GM13977 (cell line): ENCODE measurements at regions of chr2 and their contacts with region 1.

Region 1: DNA sequence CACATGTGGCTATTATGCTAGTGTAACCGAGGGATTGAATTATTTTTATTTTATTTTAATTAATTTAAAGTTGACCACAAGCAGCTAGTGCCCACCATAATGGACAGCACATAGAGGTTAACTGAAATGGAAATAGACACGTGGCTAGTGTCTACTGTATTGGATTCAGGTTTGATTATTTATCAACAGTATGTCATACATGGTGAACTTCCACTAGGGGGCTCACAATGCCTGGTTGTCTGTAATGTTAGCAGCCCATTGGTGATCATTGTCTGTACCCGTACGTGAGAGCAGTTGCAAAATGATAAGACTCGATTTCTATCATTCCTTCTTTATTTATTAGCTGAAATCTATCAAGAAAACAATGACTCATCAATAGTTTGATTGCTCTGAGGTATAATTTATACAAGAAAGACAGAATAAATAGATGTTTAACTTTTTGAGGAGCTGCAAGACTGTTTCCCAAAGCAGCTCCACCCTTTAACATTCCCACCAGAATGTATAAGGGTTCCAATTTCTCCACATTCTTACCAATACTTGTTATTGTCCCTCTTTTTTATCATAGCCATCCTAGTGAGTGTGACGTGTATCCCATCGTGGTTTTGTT is 76.5 kb downstream of the CYBRD1 start:
- DNase-seq: peak; percentile 80
- CTCF ChIP-seq: peak; percentile 81

Region 2: GRCh38 chr2:171436307-171436706 is 162.5 kb before region 1 on chr2:
- in situ Hi-C with region 1: no loop called
- DNase-seq: no peak
- CTCF ChIP-seq: no peak

Region 3: DNA sequence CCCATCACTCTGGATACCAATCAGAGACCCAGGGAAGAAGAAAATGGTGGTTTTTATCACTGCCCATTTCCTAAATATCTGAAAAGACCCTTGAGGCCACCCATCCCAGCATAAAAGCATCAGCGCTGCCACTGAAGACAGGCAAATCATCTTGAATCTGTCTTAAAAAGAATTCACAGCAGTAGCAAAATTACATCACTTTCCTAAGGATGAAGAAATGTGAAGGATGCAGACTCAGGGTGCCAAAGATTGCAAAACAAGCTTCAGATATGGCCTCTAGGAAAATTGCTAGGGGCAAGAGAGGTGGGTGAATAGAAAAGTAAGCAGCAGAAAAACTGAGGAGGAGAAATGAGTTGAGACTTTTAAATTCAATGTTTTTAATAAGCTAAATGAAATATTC is 225.3 kb after region 1 on chr2:
- in situ Hi-C with region 1: no loop called
- DNase-seq: no peak
- CTCF ChIP-seq: no peak

Region 4: GRCh38 chr2:172102391-172103278 is 503.8 kb after region 1 on chr2 and contains the start of gene DLX2:
- in situ Hi-C with region 1: loop called (anchors 25 kb)
- DNase-seq: peak; percentile 91
- CTCF ChIP-seq: no peak